ENCODE measurements at regions of chr15 and their contacts with region 1.

Region 1: GRCh38 chr15:101156509-101157159 is 95.2 kb downstream of the CHSY1 start:
- H3K4me3 ChIP-seq: no peak overlapping the region
- H3K27ac ChIP-seq: no peak overlapping the region
- H3K4me1 ChIP-seq: no peaks in the 10 kb centered on the region
- CTCF ChIP-seq: no peak

Region 2: GRCh38 chr15:101070502-101071273 is 85.9 kb before region 1 on chr15:
- CTCF ChIA-PET with region 1: no interaction called
- POLR2A ChIA-PET with region 1: interaction called, 11 read pairs
- H3K4me3 ChIP-seq: no peak overlapping the region
- H3K27ac ChIP-seq: 0 out of 2 replicates have a peak overlapping the region, but pooled peaks have one; percentile 30
- H3K4me1 ChIP-seq: peaks cover 6% of the 10 kb centered on the region
- CTCF ChIP-seq: no peak

Region 3: GRCh38 chr15:101105059-101105891 is 51.4 kb before region 1 on chr15:
- CTCF ChIA-PET with region 1: no interaction called
- POLR2A ChIA-PET with region 1: no interaction called
- H3K4me3 ChIP-seq: no peak overlapping the region
- H3K27ac ChIP-seq: no peak overlapping the region
- H3K4me1 ChIP-seq: no peaks in the 10 kb centered on the region
- CTCF ChIP-seq: no peak

Region 4: DNA sequence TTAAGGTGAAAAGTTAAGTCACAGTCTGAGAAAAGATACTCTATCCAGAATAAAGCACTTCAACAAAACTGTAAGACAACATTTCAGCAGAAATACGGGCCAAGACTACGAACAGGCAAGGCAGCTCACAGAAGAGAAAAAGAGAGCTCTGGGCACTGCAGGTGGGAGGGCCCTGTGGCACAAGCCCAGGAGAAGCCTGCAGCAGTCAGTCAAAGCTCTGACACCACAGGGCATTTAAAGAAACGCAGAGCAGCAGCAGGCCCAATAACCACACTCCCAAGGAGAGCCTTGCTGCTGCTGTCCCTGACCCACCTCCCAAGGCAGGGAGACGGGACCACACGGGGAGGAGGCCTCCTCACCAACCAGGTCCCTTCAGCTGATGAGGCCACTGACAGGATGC is 76.0 kb after region 1 on chr15:
- CTCF ChIA-PET with region 1: no interaction called
- POLR2A ChIA-PET with region 1: no interaction called
- H3K4me3 ChIP-seq: no peak overlapping the region
- H3K27ac ChIP-seq: peak overlapping the region; percentile 29; the same call in 1 of the 2 replicates
- H3K4me1 ChIP-seq: no peaks in the 10 kb centered on the region
- CTCF ChIP-seq: no peak